ENCODE measurements at regions of chr2 and their contacts with region 1.

Region 1: GRCh38 chr2:136362676-136363390 is 244.9 kb upstream of the CXCR4 start:
- DNase-seq: peak; percentile 56
- ATAC-seq: peak; percentile 78
- H3K4me3 Mint-ChIP-seq: no peak overlapping the region
- H3K27ac Mint-ChIP-seq: no peak overlapping the region
- H3K4me1 Mint-ChIP-seq: peaks cover 45% of the 10 kb centered on the region
- H3K27me3 Mint-ChIP-seq: peaks cover 8% of the 10 kb centered on the region

Region 2: DNA sequence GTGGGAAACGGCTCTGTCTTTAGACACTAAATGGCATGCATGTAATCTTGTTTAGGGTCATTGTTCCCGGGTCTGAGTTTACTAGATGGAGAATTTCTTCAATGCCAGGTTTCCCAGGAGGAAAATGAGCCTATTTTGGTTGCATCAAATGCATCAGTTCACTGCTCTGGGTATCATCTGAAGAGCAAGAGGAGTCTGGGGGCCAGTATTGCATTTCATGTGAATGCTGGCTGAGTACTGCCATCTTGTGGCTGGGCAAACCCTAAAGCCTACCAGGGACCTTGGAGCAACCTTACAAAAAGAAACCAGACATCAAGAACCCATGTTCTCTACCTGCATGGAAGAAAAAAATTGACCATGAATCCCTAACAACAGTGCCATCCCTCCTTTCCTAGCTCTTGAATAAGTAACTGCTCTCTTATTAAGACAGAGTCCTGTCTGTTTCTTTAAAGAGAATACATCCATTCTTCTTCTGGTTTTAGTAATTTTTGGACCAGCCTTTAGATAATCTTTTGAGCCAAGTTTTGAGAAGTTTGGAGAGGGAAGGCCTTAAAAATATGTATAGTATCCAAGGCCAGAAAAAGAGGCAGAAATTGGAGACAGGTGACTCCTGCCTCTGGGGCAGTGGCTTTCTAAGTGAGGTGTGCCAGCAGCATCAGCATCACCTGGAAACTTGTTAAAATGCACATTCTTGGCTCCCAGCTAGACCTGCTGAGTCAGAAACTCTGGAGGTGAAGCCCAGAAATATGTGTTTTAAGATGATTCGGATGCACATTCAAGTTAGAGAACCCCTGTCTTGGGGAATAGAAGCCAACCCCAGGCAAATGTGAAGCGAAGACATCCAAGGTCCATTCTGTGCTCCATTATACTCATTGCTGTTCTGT is 16.1 kb after region 1 on chr2:
- CTCF ChIA-PET with region 1: interaction called, 11 read pairs
- POLR2A ChIA-PET with region 1: interaction called, 6 read pairs
- DNase-seq: peak; percentile 87
- ATAC-seq: peak; percentile 50
- H3K4me3 Mint-ChIP-seq: no peak overlapping the region
- H3K27ac Mint-ChIP-seq: no peak overlapping the region
- H3K4me1 Mint-ChIP-seq: peaks cover 82% of the 10 kb centered on the region
- H3K27me3 Mint-ChIP-seq: no peaks in the 10 kb centered on the region

Region 3: GRCh38 chr2:136718273-136718672 is 355.4 kb after region 1 on chr2:
- CTCF ChIA-PET with region 1: no interaction called
- POLR2A ChIA-PET with region 1: no interaction called
- DNase-seq: no peak
- ATAC-seq: no peak
- H3K4me3 Mint-ChIP-seq: no peak overlapping the region
- H3K27ac Mint-ChIP-seq: no peak overlapping the region
- H3K4me1 Mint-ChIP-seq: no peaks in the 10 kb centered on the region
- H3K27me3 Mint-ChIP-seq: no peaks in the 10 kb centered on the region

Measured in activated CD8-positive, alpha-beta T cell treated with anti-CD3 and anti-CD28 coated beads, Interleukin-2, amount 10 ng/mL, durations not matched to agents 7 days and 5 days (primary cell).